MCF 10A (cell line): ENCODE measurements at regions of chr2 and their contacts with region 1.

Region 1: GRCh38 chr2:222318026-222318711 is 19.4 kb upstream of the PAX3 start:
- DNase-seq: peak; percentile 84
- H3K4me3 Mint-ChIP-seq: peak overlapping the region; percentile 89
- H3K27ac Mint-ChIP-seq: peak overlapping the region; percentile 89
- H3K4me1 Mint-ChIP-seq: no peaks in the 10 kb centered on the region
- H3K27me3 Mint-ChIP-seq: peaks cover 19% of the 10 kb centered on the region
- CTCF ChIP-seq: peak; percentile 63

Region 2: DNA sequence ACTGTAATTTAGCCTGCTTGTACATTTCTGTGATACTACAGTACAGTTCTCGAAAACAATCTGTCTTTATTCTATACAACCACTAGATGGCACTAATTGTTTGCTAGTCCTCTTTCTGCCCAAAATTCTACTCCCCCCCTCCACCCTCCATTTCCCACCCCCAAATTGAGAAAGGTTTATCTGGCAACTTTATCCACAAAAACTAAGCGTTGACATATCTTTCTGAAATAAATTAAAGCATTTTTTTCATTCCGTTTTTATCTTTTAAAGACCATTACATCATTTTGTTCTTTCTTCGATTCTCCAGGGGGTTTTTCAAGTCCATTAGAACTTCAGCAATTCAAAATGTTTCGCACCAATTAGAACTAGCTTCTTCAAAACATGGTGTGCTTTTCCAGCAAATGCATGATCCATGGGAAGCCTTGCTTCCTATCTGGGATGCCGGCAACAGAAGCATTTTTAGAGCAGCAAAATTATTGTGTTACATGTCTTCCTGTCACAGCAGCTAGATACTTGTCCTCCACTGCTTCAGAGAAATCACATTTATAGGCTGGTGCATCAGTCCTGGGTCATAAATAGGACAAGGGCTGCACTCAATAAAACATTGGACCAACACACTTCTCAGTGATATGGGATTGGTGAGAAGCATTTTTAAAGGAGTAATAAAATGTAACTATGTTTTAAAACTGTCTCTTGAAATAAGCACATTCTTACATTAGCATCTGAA is 260.7 kb before region 1 on chr2:
- CTCF ChIA-PET with region 1: interaction called, 6 read pairs
- POLR2A ChIA-PET with region 1: interaction called, 4 read pairs
- intact Hi-C with region 1: loop called (anchors 1 kb)
- DNase-seq: no peak
- H3K4me3 Mint-ChIP-seq: no peak overlapping the region
- H3K27ac Mint-ChIP-seq: no peak overlapping the region
- H3K4me1 Mint-ChIP-seq: peaks cover 5% of the 10 kb centered on the region
- H3K27me3 Mint-ChIP-seq: peaks cover 81% of the 10 kb centered on the region
- CTCF ChIP-seq: peak; percentile 54

Region 3: DNA sequence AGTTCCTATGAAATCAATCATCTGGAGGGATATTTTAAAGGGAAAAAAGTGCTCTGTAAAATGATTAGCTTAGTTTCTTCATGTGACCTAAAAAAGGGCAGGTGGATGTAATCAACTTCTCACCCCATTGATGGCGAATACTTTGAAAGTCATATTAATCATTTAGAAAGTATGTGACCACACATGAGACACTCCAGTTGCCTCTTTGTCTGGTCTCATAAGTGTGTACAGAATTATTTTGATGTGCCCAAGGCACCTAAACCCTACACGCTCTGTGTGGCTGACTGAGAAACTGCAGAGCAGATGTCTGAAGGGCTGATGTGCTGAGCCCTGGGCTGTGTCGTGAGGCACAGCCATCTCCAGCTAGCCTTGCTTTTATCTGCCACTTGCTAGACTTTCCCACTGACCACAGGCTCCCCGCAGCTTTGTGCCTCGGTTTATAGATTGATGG is 133.1 kb after region 1 on chr2:
- CTCF ChIA-PET with region 1: interaction called, 8 read pairs
- POLR2A ChIA-PET with region 1: interaction called, 11 read pairs
- intact Hi-C with region 1: no loop called
- DNase-seq: no peak
- H3K4me3 Mint-ChIP-seq: peak overlapping the region; percentile 30
- H3K27ac Mint-ChIP-seq: peak overlapping the region; percentile 61
- H3K4me1 Mint-ChIP-seq: peaks cover 62% of the 10 kb centered on the region
- H3K27me3 Mint-ChIP-seq: no peaks in the 10 kb centered on the region
- CTCF ChIP-seq: no peak

Region 4: DNA sequence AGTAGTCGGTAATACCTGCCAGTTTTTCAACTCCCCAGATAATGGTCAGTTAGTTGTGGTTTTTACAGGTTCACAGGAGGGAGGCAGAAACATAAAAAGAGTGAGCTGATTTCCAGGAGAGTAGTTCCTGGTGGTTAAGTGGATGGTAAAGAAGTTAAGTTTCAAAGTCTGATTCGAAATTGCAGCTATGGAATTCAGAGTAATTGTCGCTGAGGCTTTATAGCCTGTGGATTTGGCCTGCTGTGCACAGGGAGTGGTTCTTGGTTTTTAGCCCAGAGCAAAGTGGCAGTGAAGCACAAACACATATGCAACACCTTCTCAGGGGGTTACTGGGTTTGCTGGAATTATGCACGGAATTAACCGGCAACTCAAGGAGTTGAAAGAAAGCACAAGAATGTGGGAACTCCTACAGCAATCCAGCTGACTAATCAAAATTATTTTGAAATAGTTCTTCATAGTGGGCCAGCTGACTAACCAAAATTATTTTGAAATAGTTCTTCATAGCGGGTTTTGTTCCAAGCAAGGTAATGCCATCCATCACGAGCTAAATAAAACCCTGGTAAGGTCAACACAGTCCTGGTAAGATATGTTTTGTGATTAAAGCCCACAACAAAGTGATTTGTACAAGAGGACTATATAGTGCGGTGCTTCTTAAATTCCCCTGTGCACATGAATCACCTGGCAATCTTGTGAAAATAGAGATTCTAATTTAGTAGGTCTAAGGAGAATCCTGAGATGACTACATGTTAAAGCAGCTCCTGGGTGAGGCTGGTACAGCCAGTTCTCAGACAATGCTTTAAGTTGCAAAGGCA is 200.6 kb after region 1 on chr2:
- CTCF ChIA-PET with region 1: interaction called, 5 read pairs
- POLR2A ChIA-PET with region 1: interaction called, 57 read pairs
- intact Hi-C with region 1: loop called (anchors 1 kb)
- DNase-seq: peak; percentile 96
- H3K4me3 Mint-ChIP-seq: peak overlapping the region; percentile 25
- H3K27ac Mint-ChIP-seq: peak overlapping the region; percentile 82
- H3K4me1 Mint-ChIP-seq: peaks cover 47% of the 10 kb centered on the region
- H3K27me3 Mint-ChIP-seq: no peaks in the 10 kb centered on the region
- CTCF ChIP-seq: no peak

Region 5: GRCh38 chr2:222561817-222562645 is 243.9 kb after region 1 on chr2:
- CTCF ChIA-PET with region 1: interaction called, 33 read pairs
- POLR2A ChIA-PET with region 1: interaction called, 17 read pairs
- intact Hi-C with region 1: loop called (anchors 1 kb)
- DNase-seq: peak; percentile 78
- H3K4me3 Mint-ChIP-seq: no peak overlapping the region
- H3K27ac Mint-ChIP-seq: no peak overlapping the region
- H3K4me1 Mint-ChIP-seq: peaks cover 7% of the 10 kb centered on the region
- H3K27me3 Mint-ChIP-seq: no peaks in the 10 kb centered on the region
- CTCF ChIP-seq: peak; percentile 72

Region 6: DNA sequence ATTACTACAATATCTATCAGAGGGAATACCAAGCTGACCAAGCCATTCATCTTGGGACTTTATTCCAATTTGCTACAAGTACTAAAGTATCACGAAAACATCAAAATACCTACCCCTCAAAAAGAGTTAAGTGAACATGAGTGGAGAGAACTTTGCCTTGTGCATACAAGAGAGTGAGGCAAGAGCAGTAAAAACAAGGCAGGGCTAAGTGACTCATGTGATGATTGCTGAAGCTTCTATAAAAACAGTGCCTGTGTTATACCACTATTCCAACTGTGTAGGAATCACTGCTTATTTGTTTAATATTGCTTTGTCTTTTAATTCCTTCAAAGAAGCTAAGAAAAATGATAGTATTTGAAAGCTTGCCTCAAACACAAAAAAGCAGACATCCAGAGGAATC is 276.5 kb after region 1 on chr2:
- CTCF ChIA-PET with region 1: interaction called, 8 read pairs
- POLR2A ChIA-PET with region 1: interaction called, 18 read pairs
- intact Hi-C with region 1: no loop called
- DNase-seq: peak; percentile 54
- H3K4me3 Mint-ChIP-seq: no peak overlapping the region
- H3K27ac Mint-ChIP-seq: peak overlapping the region; percentile 7
- H3K4me1 Mint-ChIP-seq: peaks cover 11% of the 10 kb centered on the region
- H3K27me3 Mint-ChIP-seq: no peaks in the 10 kb centered on the region
- CTCF ChIP-seq: no peak